Activated T-helper 2 cell treated with anti-CD3 and anti-CD28 coated beads, Interferon-gamma antibody, Interleukin-2, Interleukin-4, amounts not matched to agents 10 μg/mL and 5 μg/mL and 100 μg/mL, durations not matched to agents 14 hours and 24 hours and 36 hours (primary cell): ENCODE measurements at regions of chr5 and their contacts with region 1.

Region 1: GRCh38 chr5:168747987-168748777 is 169.0 kb upstream of the PANK3 start:
- DNase-seq: peak; percentile 51
- H3K4me3 Mint-ChIP-seq: no peak overlapping the region
- H3K27ac Mint-ChIP-seq: peak overlapping the region; percentile 76
- H3K4me1 Mint-ChIP-seq: peaks cover 13% of the 10 kb centered on the region
- H3K27me3 Mint-ChIP-seq: no peaks in the 10 kb centered on the region

Region 2: GRCh38 chr5:168765551-168766425 is 17.6 kb after region 1 on chr5:
- intact Hi-C with region 1: no loop called
- DNase-seq: no peak
- H3K4me3 Mint-ChIP-seq: no peak overlapping the region
- H3K27ac Mint-ChIP-seq: no peak overlapping the region
- H3K4me1 Mint-ChIP-seq: no peaks in the 10 kb centered on the region
- H3K27me3 Mint-ChIP-seq: no peaks in the 10 kb centered on the region

Region 3: GRCh38 chr5:168898247-168898911 is 150.2 kb after region 1 on chr5:
- intact Hi-C with region 1: loop called (anchors 5 kb)
- DNase-seq: no peak
- H3K4me3 Mint-ChIP-seq: no peak overlapping the region
- H3K27ac Mint-ChIP-seq: no peak overlapping the region
- H3K4me1 Mint-ChIP-seq: peaks cover 31% of the 10 kb centered on the region
- H3K27me3 Mint-ChIP-seq: peaks cover 2% of the 10 kb centered on the region

Region 4: DNA sequence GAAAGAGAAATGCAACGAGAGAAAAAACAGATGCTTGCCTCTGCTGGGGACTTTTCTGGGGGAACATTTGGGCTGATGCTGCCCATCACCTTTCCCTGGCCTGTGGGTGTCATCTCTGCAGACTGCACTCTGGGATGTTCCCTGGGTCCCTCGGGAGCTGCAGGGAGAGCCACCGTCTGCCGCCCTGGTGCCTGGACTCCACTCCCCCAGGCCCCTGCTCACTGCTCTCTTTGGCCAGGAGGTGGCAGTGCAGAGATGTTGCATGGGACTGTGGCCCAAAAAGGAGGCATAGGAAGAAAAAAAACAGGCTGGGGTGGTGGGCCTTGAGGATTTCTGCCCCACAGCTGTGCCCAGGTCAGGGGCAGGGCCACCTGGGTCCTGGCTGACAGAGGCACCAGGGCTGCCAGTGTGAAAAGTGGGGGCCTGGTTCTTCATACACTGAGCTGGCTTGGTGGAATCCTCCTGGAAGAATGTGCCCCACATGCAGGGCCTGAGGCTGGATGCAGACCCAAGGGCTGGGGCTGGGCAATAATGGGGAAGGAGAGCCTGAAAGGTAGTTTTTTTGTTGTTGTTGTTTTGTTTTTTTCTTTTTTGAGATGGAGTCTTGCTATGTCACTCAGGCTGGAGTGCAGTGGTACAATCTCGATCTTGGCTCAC is 199.2 kb after region 1 on chr5:
- intact Hi-C with region 1: loop called (anchors 1 kb)
- DNase-seq: peak; percentile 12
- H3K4me3 Mint-ChIP-seq: no peak overlapping the region
- H3K27ac Mint-ChIP-seq: no peak overlapping the region
- H3K4me1 Mint-ChIP-seq: peaks cover 17% of the 10 kb centered on the region
- H3K27me3 Mint-ChIP-seq: no peaks in the 10 kb centered on the region